ENCODE measurements at regions of chr3 and their contacts with region 1.

Region 1: GRCh38 chr3:107927361-107928083 is 163.3 kb downstream of the CD47 start:
- DNase-seq: peak; percentile 81
- H3K4me3 ChIP-seq: peak overlapping the region; percentile 67 to 73 (median 68)
- H3K27ac ChIP-seq: no peak overlapping the region
- H3K4me1 ChIP-seq: peaks cover 11% of the 10 kb centered on the region
- H3K27me3 ChIP-seq: peaks cover 0 to 2% of the 10 kb centered on the region in 2 experiments
- CTCF ChIP-seq: peak; percentile 93 to 96
- POLR2A ChIP-seq: no peak

Region 2: GRCh38 chr3:107676469-107677309 is 250.8 kb before region 1 on chr3:
- CTCF ChIA-PET with region 1: interaction called, 28 read pairs
- POLR2A ChIA-PET with region 1: no interaction called
- dilution Hi-C with region 1: no loop called
- intact Hi-C with region 1: loop called (anchors 5 kb)
- DNase-seq: peak; percentile 42
- H3K4me3 ChIP-seq: no peak overlapping the region
- H3K27ac ChIP-seq: no peak overlapping the region
- H3K4me1 ChIP-seq: no peaks in the 10 kb centered on the region
- H3K27me3 ChIP-seq: no peaks in the 10 kb centered on the region
- CTCF ChIP-seq: peak; percentile 20 to 31
- POLR2A ChIP-seq: no peak

Region 3: GRCh38 chr3:107938143-107938542 is 10.6 kb after region 1 on chr3:
- CTCF ChIA-PET with region 1: interaction called, 16 read pairs
- POLR2A ChIA-PET with region 1: no interaction called
- dilution Hi-C with region 1: no loop called
- intact Hi-C with region 1: no loop called
- DNase-seq: peak; percentile 70
- H3K4me3 ChIP-seq: no peak overlapping the region
- H3K27ac ChIP-seq: no peak overlapping the region
- H3K4me1 ChIP-seq: peaks cover 13% of the 10 kb centered on the region
- H3K27me3 ChIP-seq: no peaks in the 10 kb centered on the region
- CTCF ChIP-seq: peak; percentile 28 to 55
- POLR2A ChIP-seq: no peak

Region 4: DNA sequence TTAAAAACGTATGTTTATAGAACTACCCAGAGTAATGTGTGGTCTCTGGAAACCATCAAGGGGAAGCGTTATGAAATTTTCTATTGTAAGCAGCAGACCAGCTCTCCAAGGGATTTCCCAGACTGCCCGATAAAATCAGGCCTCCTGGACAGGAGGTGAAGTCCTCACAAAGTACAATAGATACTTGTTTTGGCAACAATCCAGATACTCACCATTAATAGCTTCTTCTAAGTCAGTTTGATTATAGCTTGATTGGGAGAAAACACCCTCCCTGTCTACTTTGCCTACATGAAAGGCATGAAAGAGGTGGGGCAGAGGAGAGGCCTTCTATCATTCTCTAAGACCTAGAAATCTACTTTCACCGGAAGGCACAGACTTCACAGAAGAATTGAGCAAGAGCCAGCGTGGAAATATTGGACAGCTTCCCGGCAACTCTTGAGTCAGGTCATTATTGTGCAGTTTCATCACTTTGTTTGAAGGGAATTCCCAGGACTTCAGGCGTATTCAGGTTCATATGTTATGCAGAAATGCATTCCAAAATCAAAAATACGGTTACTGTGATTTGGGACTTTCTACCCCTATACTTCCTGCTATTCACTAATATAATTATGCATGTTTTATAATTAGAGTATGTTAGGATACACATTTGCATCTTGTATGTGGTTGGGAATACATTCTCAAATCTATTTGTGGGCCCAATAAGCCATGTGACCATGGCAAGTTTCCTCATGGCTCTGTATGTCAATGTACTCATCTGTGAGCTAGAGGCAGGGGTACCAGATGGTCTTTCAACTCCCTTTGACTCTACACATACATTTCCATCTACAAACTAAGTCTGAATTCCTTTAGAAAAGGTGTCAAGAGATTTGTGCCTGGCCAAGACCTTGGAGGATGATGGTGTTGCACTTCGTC is 59.8 kb after region 1 on chr3:
- CTCF ChIA-PET with region 1: interaction called, 13 read pairs
- POLR2A ChIA-PET with region 1: no interaction called
- dilution Hi-C with region 1: no loop called
- intact Hi-C with region 1: loop called (anchors 1 kb)
- DNase-seq: peak; percentile 95
- H3K4me3 ChIP-seq: no peak overlapping the region
- H3K27ac ChIP-seq: peak overlapping the region; percentile 47
- H3K4me1 ChIP-seq: peaks cover 33% of the 10 kb centered on the region
- H3K27me3 ChIP-seq: no peaks in the 10 kb centered on the region
- CTCF ChIP-seq: no peak
- POLR2A ChIP-seq: no peak

Region 5: GRCh38 chr3:108202837-108203236 is 275.3 kb after region 1 on chr3:
- CTCF ChIA-PET with region 1: no interaction called
- POLR2A ChIA-PET with region 1: no interaction called
- dilution Hi-C with region 1: no loop called
- intact Hi-C with region 1: no loop called
- DNase-seq: no peak
- H3K4me3 ChIP-seq: no peak overlapping the region
- H3K27ac ChIP-seq: no peak overlapping the region
- H3K4me1 ChIP-seq: no peaks in the 10 kb centered on the region
- H3K27me3 ChIP-seq: no peaks in the 10 kb centered on the region
- CTCF ChIP-seq: no peak
- POLR2A ChIP-seq: no peak

Region 6: DNA sequence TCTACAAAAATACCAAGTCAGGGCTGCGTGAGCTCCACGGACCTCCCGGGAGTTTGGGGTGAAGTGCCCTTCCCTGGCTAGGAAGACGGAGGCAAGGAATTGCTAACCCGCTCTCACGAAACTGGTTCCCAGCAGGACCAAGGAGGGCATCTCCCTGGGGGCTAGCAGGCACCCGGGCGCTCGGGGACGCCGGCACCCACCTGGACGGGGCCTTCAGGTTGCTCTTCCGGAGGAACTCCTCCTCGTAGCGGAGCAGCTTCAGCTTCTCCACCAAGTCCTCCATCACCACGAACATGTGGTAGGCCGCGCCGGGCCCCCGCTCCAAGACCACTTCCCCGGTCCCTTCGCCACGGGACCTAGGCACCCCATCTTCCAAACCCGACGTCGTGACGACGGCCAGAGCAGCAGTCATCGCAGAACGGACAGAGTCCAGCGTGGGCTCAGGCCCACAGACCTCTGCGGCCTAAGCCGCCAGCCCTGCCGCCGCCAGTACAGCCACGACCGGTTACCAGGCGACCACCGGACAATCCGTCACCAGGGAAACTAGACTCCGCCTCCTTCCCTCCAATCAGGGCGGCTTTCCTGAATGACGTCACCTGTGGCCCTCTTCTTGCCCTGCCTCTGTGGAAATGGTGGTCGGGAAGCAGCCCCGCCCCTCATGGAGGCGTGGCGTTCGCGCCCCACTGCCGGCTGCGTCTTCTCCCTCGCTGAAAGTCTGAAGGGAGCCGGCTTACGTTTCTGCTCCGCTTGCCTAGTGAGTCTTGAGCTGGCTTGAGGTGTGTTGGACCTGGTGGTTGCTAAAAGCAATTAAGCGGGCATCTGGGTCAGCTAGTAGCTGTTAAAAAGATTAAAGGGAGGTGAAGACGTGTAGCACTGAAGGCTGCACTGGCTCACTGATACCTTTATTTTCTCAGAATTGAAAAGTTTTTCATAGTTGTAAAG is 294.7 kb after region 1 on chr3 and contains the start of gene IFT57:
- CTCF ChIA-PET with region 1: interaction called, 5 read pairs
- POLR2A ChIA-PET with region 1: no interaction called
- dilution Hi-C with region 1: no loop called
- intact Hi-C with region 1: loop called (anchors 1 kb)
- DNase-seq: peak; percentile 99
- H3K4me3 ChIP-seq: peak within 1 kb of the TSS; percentile 66 to 87 (median 82)
- H3K27ac ChIP-seq: peak within 1 kb of the TSS; percentile 68
- H3K4me1 ChIP-seq: peaks cover 21% of the 10 kb centered on the region
- H3K27me3 ChIP-seq: no peaks in the 10 kb centered on the region
- CTCF ChIP-seq: no peak
- POLR2A ChIP-seq: peak; percentile 36
- total RNA-seq, gene IFT57: 23.4 and 25.1 TPM in 2 replicates